ENCODE measurements at regions of chr1 and their contacts with region 1.

Region 1: DNA sequence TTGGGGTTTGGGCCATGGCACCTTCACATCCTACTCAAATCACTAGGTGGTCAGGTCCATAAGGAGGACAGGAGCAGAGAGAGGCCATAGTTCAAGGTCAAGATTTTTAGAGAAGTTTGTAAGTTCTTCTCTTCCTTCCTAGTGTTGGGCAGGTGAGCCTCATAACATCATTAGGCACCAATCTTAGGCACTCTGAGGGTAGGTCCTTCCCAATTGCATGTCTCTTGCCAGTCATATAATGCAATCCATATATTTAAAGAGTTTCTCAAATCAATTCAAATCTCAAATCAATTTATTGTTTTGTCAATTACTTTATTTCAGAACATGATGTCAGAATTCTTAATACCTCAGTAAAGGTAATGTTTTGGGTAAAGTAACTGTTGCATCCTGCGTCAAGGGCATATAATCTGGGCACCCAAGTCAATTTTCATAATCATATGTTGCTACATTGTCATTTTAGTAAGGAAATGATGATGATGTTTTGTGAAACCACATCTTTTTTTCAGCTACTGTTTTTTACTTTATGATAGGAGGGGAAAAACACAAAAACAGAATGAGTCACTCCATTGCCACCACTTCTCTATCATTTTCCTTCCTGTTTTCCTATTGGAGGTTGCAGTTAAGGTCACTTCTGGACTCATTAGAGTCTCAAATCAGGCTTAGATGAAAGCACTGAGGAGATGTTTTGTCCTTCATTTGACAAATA is 122.7 kb downstream of the UCHL5 start:
- DNase-seq: no peak
- H3K4me3 Mint-ChIP-seq: peak overlapping the region; percentile 23
- H3K27ac Mint-ChIP-seq: peak overlapping the region; percentile 62
- H3K4me1 Mint-ChIP-seq: peaks cover 28% of the 10 kb centered on the region
- H3K27me3 Mint-ChIP-seq: no peaks in the 10 kb centered on the region

Region 2: GRCh38 chr1:192516776-192517297 is 419.6 kb before region 1 on chr1:
- intact Hi-C with region 1: loop called (anchors 2 kb)
- DNase-seq: peak; percentile 89
- H3K4me3 Mint-ChIP-seq: peak overlapping the region; percentile 81
- H3K27ac Mint-ChIP-seq: peak overlapping the region; percentile 89
- H3K4me1 Mint-ChIP-seq: peaks cover 40% of the 10 kb centered on the region
- H3K27me3 Mint-ChIP-seq: no peaks in the 10 kb centered on the region

Region 3: GRCh38 chr1:192904438-192904895 is 32.0 kb before region 1 on chr1:
- intact Hi-C with region 1: loop called (anchors 2 kb)
- DNase-seq: no peak
- H3K4me3 Mint-ChIP-seq: no peak overlapping the region
- H3K27ac Mint-ChIP-seq: no peak overlapping the region
- H3K4me1 Mint-ChIP-seq: peaks cover 7% of the 10 kb centered on the region
- H3K27me3 Mint-ChIP-seq: no peaks in the 10 kb centered on the region

Region 4: DNA sequence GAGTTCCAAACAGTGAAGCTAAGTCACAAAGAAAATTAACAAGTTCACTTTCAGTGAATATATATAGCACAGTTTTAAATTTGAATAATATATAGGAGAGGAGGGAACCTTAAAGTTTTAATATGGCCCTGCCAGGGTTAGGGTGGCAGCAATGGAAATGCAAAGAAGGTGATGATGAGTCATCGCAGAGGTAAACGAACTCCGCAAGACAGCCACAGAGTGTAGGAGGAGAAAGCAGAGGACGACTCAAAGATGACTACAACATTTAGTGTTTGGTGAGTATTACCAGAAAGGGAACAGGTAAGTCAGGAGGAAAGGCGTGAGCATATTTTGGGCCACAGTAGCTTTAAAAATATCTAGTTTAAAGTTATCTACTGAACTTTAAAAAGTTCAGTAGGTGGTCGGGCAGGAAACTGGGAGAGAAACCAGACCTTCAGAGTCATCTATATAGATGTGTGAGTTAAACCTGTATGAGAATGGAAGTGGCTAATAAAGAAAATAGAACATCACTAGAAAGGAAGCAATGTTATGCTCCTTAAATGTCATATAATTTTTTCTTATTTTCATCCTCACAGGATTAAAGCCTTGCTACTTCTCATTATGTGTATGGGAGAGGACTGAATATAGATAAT is 47.0 kb after region 1 on chr1:
- intact Hi-C with region 1: loop called (anchors 1 kb)
- DNase-seq: peak; percentile 69
- H3K4me3 Mint-ChIP-seq: peak overlapping the region; percentile 36
- H3K27ac Mint-ChIP-seq: peak overlapping the region; percentile 78
- H3K4me1 Mint-ChIP-seq: peaks cover 47% of the 10 kb centered on the region
- H3K27me3 Mint-ChIP-seq: no peaks in the 10 kb centered on the region

Region 5: DNA sequence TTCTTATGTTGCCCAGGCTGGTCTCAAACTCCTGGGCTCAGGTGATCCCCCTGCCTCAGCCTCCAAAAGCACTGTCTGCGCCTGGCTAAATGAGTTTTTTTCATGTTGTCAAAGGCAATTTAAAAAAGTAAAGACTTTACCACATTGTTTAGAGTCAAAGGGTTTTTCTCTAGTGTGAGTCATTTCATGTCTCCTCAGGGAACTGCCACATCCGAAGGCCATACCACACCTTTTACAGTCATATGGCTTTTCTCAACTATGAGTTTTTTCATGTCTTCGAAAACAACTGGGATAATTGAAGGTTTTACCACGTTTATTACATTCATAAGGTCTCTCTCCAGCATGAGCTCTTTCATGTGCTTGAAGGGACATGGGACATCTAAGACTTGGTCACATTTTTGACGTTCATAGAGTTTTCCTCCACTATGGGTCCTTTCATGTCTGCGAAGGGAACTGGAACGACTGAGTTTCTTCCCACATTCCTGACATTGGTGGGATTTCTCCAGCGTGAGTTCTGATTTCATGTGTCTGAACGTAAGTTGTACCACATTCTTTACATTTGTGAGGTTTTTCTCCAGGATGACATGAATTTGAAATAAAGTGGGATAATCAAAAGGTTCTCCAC is 57.1 kb after region 1 on chr1:
- intact Hi-C with region 1: no loop called
- DNase-seq: no peak
- H3K4me3 Mint-ChIP-seq: no peak overlapping the region
- H3K27ac Mint-ChIP-seq: peak overlapping the region; percentile 69
- H3K4me1 Mint-ChIP-seq: no peaks in the 10 kb centered on the region
- H3K27me3 Mint-ChIP-seq: no peaks in the 10 kb centered on the region

Region 6: GRCh38 chr1:193059268-193060225 is 123.1 kb after region 1 on chr1 and contains the starts of genes RO60 and UCHL5:
- intact Hi-C with region 1: loop called (anchors 2 kb)
- DNase-seq: peak; percentile 98
- H3K4me3 Mint-ChIP-seq: peak within 1 kb of the TSS; percentile 98
- H3K27ac Mint-ChIP-seq: peak within 1 kb of the TSS; percentile 99
- H3K4me1 Mint-ChIP-seq: peaks cover 47% of the 10 kb centered on the region
- H3K27me3 Mint-ChIP-seq: no peaks in the 10 kb centered on the region
- total RNA-seq, gene RO60: 70.2 and 70.9 TPM in 2 replicates
- total RNA-seq, gene UCHL5: 89.2 and 97.2 TPM in 2 replicates

Measured in activated CD4-positive, alpha-beta T cell treated with anti-CD3 and anti-CD28 coated beads, Interleukin-2, amount 10 ng/mL, durations not matched to agents 24 days and 14 days (primary cell).